GM13977 (cell line): ENCODE measurements at regions of chr7 and their contacts with region 1.

Region 1: DNA sequence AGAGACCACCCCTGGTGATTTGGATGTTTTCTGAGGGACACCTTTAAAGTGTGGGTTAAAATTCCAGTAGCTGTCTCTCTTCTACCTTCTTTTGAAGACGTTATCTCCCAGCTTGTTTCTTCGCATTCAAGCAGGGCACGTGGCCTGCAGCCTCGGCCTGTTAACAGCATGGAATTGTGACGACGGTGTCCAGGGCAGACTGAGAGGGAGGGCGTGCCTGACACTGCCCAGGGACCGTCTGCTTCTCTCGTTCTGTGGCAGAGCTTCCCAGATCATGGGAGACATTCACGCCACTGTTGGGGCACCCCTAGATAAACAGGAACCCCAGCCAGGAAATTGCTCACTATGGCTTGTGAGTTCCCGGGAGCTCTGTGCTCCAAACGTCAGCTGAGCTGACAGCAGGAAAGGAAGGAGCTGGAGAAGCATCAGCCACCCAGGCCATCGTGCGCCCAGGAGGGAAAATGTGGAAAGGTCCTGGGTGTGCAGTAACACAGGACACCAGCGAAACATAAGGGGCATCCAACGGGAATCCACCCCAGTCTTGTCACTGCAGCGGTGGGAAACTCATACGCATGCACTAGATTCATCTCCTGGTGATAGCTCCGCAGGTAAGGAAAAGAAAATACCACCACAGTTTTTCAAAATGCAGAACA is 41.1 kb upstream of the RBM33 start:
- DNase-seq: no peak
- CTCF ChIP-seq: no peak

Region 2: DNA sequence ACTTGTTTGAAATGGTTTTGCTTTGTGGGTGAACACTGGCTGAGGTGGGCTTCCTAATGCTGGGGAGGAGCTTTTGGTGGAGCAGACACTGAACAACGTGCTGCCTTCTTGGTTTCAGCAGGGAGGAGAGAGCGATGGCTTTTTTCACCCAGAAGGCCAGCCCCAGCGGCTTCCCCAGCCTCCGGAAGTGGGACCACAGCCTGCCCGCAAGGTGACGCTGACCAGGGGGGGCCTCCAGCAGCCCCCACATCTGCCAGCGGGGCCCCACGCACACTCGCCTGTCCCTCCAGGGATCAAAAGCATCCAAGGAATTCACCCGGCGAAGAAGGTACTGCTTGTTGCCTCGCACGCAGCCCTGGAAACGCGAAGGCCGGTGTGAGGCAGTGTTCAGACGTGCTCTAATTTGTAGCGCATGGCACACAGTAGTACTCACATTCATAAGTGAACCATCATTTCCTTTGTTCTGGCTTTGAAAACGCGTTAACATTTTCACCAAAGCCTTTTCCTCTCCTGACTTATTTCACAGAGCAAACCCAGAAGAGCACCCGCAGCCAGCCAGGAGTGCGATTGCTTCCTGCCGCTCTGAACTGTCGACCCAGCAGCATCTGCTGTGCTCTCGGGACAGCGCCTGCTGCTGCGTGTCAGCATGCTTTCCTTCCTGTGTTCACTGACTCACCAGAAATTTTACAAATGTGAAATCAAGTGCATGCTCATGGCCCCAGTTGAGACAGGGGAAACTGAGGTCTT is 160.5 kb after region 1 on chr7:
- in situ Hi-C with region 1: loop called (anchors 10 kb)
- DNase-seq: peak; percentile 77
- CTCF ChIP-seq: no peak

Region 3: GRCh38 chr7:155921804-155922721 is 318.7 kb after region 1 on chr7:
- in situ Hi-C with region 1: no loop called
- DNase-seq: no peak
- CTCF ChIP-seq: no peak